A673 (cell line): ENCODE measurements at regions of chr11 and their contacts with region 1.

Region 1: DNA sequence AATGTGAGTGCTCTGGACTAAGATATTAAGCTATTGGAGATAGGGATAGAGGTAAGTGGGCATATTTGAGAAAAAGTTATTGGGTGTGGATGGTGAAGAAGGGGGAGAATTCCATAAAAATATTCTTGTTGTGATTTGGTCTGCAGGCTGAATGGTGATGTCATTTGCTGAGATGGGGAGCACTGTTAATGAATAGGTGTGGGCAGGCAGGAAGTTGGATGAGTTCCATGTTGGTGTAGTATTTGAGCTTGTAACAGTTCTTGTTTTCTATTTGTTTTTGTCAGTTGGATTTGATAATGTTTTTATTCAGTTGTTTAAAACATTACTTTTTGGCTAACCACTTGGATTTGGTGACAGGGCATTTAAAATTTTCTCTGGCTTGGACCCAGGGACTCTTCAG is 168.8 kb downstream of the C11orf87 start:
- DNase-seq: no peak
- H3K4me3 ChIP-seq: no peak overlapping the region
- H3K27ac ChIP-seq: no peak overlapping the region
- H3K4me1 ChIP-seq: no peaks in the 10 kb centered on the region
- H3K27me3 ChIP-seq: peaks cover 33% of the 10 kb centered on the region
- CTCF ChIP-seq: no peak

Region 2: GRCh38 chr11:109112261-109112660 is 478.5 kb before region 1 on chr11:
- CTCF ChIA-PET with region 1: no interaction called
- POLR2A ChIA-PET with region 1: interaction called, 15 read pairs
- intact Hi-C with region 1: no loop called
- DNase-seq: no peak
- H3K4me3 ChIP-seq: no peak overlapping the region
- H3K27ac ChIP-seq: no peak overlapping the region
- H3K4me1 ChIP-seq: peaks cover 17% of the 10 kb centered on the region
- H3K27me3 ChIP-seq: peaks cover 28% of the 10 kb centered on the region
- CTCF ChIP-seq: no peak

Region 3: DNA sequence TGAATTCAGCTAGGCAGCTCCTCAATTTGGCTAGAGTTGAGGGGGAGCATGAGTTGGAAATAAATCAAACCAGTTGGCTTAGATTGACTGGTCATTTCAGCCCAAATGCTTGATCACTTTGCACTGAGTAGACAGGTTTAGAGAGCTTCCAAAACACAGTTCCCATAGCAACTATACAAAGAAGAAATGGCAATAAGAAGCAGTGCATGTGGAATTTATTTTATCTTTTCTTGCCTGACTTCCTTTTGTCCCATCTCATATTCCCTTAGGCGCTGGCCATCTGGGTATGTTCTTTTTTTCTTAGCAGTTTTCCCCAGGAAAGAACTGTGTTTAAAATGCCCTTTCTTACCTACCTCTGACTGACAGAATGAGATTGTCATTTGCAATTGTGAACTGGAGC is 207.5 kb before region 1 on chr11:
- CTCF ChIA-PET with region 1: no interaction called
- POLR2A ChIA-PET with region 1: no interaction called
- intact Hi-C with region 1: no loop called
- DNase-seq: no peak
- H3K4me3 ChIP-seq: no peak overlapping the region
- H3K27ac ChIP-seq: no peak overlapping the region
- H3K4me1 ChIP-seq: no peaks in the 10 kb centered on the region
- H3K27me3 ChIP-seq: peaks cover 11% of the 10 kb centered on the region
- CTCF ChIP-seq: no peak